ENCODE measurements at regions of chr3 and their contacts with region 1.

Region 1: GRCh38 chr3:33636125-33636850 is 81.8 kb downstream of the CLASP2 start:
- DNase-seq: no peak
- H3K4me3 ChIP-seq: no peak overlapping the region
- H3K27ac ChIP-seq: no peak overlapping the region
- H3K4me1 ChIP-seq: peaks cover 0 to 8% (median 7%) of the 10 kb centered on the region in 4 donors
- H3K27me3 ChIP-seq: no peaks in the 10 kb centered on the region
- CTCF ChIP-seq: peak; percentile 65 to 76 (median 67)
- EP300 ChIP-seq: no peak
- POLR2A ChIP-seq: no peak

Region 2: GRCh38 chr3:33717866-33718594 is 81.7 kb after region 1 on chr3 and contains the start of gene CLASP2:
- intact Hi-C with region 1: loop called (anchors 2 kb)
- DNase-seq: peak; percentile 96
- H3K4me3 ChIP-seq: peak within 1 kb of the TSS; percentile 79 to 99 (median 92)
- H3K27ac ChIP-seq: peak within 1 kb of the TSS; percentile 97 to 100 (median 98)
- H3K4me1 ChIP-seq: peaks cover 7 to 22% (median 19%) of the 10 kb centered on the region in 4 donors
- H3K27me3 ChIP-seq: no peaks in the 10 kb centered on the region
- CTCF ChIP-seq: no peak
- EP300 ChIP-seq: no peak
- POLR2A ChIP-seq: no peak
- total RNA-seq, gene CLASP2: 38.4 to 53.2 (median 43.1) TPM

Region 3: DNA sequence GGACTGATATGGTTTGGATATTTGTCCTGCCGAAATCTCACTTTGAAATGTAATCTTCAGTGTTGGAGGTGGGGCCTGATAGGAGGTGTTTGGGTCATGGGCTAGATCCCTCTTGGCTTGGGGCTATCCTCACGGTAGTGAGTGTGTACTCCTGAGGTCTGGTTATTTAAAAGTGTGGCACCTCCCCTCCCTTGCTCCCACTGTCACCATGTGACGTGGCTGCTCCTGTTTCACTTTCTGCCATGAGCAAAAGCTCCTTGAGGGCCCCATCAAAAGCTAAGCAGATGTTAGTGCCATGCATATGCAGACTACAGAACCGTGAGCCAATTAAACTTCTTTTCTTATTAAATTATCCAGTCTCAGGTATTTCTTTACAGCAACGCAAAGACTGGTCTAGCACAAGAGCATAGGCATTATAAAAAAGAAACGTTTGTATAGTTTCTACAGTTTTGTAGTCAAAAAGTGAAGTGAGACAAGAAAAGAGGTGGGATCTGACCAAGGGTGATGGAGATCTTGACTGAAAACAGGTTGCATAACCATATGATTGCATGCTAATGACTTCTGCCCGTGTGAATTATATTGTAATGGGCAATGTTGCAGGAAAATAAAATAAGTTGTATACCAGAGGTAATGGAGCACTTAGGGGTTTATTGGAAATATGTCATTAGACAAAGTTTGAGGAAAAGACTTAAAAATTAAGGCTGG is 110.3 kb after region 1 on chr3:
- intact Hi-C with region 1: no loop called
- DNase-seq: no peak
- H3K4me3 ChIP-seq: no peak overlapping the region
- H3K27ac ChIP-seq: no peak overlapping the region
- H3K4me1 ChIP-seq: no peaks in the 10 kb centered on the region
- H3K27me3 ChIP-seq: no peaks in the 10 kb centered on the region
- CTCF ChIP-seq: no peak
- EP300 ChIP-seq: no peak
- POLR2A ChIP-seq: no peak

Region 4: DNA sequence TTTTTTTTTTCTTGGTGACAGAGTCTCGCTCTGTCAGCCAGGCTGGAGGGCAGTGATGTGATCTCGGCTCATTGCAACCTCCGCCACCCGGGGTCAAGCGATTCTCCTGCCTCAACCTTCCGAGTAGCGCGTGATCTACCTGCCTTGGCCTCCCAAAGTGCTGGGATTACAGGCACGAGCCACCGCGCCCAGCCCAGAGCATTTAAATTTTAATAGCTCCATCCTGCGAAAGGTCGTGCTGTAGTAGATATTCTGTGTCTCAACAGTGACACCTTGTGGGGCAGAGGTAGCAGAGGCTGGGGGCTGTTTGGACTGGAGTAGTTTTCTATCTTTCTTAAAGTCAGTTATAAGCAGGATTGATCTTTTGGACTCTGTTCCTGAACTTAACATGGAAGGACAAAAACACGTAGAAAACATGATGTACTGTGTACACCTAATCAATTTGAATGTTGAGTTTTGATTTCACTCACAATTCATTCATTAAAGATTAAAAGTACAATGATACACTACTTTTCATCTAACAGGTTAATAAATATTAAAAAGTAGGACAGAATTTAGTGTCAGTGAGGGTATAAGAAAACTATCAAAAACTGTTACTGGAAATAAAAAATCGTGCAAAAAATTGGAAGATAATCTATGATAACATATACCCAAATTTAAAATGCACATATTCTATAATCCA is 151.2 kb after region 1 on chr3:
- intact Hi-C with region 1: loop called (anchors 2 kb)
- DNase-seq: no peak
- H3K4me3 ChIP-seq: peak overlapping the region; percentile 29 to 46 (median 34)
- H3K27ac ChIP-seq: no peak overlapping the region
- H3K4me1 ChIP-seq: peaks cover 0 to 6% (median 4%) of the 10 kb centered on the region in 4 donors
- H3K27me3 ChIP-seq: no peaks in the 10 kb centered on the region
- CTCF ChIP-seq: peak; percentile 66 to 83 (median 74)
- EP300 ChIP-seq: no peak
- POLR2A ChIP-seq: no peak

Region 5: DNA sequence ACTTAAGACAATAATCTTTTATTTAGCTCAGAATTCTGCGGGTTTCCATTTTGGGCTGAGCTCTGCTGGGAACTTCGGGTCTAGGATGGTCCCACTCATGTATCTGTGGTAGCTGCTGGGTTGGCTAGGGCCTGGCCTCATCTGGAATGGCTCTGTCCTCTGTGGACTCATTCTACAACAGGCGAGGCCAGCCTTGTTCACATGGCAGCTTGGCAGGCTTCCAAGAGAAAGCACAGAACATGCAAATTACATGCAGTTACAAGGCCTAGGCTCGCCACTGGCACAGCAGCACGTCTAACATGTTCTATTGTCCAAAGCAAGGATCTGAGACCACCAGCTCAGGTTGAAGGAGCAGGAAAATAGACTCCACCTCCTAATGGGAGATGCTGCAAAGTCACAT is 593.6 kb after region 1 on chr3:
- intact Hi-C with region 1: no loop called
- DNase-seq: no peak
- H3K4me3 ChIP-seq: no peak overlapping the region
- H3K27ac ChIP-seq: no peak overlapping the region
- H3K4me1 ChIP-seq: peaks cover 0 to 5% (median 0%) of the 10 kb centered on the region in 4 donors
- H3K27me3 ChIP-seq: no peaks in the 10 kb centered on the region
- CTCF ChIP-seq: no peak
- EP300 ChIP-seq: no peak
- POLR2A ChIP-seq: no peak